Cardiac septum (tissue), 1 donor: ENCODE measurements at regions of chr20 and their contacts with region 1.

Region 1: GRCh38 chr20:56468316-56469082 is at the start of gene RTF2:
- DNase-seq: peak; percentile 96
- total RNA-seq, gene RTF2: 76.0 TPM

Region 2: DNA sequence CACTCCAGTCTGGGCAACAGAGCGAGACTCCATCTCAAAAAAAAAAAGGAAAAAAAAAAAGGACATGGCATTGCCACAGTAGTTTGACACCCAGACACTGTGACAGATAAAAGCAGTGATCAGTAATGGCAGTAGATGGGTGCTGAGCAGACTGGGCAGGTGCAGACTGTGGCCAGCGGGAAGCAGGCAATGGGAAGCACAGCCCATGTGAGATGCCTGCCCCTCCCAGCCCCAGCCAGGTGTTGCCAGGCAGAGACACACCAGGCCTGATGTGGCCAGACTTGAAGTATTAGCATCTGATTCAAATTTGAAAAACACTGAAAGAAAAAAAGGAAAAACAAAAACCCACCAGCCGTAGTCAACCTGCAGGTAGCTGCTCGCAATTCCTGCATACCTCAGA is 86.4 kb before region 1 on chr20:
- intact Hi-C with region 1: no loop called
- DNase-seq: no peak

Region 3: DNA sequence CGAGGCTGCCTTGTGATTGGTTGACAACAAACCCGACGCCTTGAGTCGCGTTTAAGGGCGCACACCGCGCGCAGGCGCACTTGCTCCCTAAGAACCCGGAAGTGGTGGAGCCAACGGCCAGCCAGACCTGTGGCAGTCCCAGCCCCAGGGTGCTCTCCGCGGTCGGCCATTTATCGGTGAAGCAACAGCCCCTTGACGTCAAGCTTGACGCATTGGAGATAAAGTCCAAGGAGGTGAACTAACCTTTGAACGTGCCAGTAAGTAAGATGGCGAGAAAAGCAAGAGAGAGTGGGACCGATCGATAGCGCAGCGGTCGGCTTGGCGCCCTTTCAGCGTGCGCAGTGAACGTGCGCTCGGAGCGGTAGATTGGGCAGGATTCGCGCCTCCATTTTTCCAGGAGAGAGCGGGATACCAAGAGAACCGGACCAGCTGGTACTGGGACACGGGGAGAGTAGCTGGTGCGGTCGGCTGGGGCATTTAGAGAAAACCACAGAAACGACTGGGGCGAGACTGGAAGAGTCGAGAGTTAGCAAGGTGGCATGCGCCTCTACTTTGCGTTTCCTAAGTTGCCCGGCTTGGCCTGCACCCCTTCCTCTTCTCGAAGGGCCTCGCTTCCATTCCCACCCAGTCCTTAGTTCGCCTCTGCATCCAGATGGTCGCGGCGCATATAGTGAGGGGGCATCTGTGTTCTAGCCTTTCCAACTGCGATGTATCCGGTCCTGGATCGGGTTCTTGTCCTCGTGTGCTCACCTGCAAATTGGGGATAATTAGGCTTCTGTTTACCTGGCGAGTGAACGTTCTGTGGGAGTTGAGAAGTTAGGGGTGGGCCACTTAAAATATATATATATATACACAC is 76.0 kb before region 1 on chr20 and contains the start of gene CSTF1:
- intact Hi-C with region 1: loop called (anchors 1 kb)
- DNase-seq: peak; percentile 100
- total RNA-seq, gene CSTF1: 15.3 TPM